Activated CD8-positive, alpha-beta memory T cell treated with anti-CD3 and anti-CD28 coated beads, Interleukin-2, amount 10 ng/mL, durations not matched to agents 7 days and 5 days (primary cell): ENCODE measurements at regions of chr11 and their contacts with region 1.

Region 1: DNA sequence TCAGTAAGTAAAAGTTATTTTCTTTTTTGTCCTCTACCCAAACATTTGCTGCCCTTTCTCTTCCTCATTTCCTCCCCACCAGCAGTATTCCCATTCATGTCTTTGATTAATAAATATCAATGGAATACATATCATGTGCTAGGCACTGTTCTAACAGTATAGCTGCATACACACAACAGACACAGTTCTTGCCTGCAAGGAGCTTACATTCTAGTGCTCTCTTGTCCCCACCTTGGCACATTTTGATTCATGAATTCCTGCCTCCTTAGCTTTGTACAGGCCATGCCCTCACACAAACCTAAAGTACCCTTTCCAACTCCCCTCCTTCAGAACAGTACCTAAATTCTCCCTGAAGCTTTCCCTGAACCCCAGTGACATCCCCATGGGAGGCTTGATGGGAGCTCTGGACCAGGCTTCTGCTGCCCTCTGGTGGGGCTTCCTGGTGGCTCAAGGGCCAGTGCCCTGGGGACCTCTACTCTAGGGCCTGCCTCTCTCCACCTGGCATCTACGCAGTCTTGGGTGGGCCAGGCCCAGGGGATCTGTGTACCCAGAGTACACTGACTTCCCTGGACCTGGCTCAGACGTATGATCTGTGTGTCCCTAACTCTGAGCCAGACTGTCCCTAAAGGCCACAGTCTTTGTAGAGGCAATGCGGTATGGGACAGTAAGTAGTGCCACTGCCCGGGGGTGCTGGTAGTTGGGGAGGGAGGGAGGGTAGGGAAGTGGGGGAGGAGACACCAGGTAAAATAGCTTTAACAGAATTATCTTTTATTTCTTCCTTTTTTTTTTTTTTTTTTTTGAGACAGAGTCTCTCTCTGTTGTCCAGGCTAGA is 14.1 kb downstream of the RPS13 start:
- DNase-seq: peak; percentile 63
- ATAC-seq: peak; percentile 77
- H3K4me3 Mint-ChIP-seq: no peak overlapping the region
- H3K27ac Mint-ChIP-seq: no peak overlapping the region
- H3K4me1 Mint-ChIP-seq: no peaks in the 10 kb centered on the region
- H3K27me3 Mint-ChIP-seq: peaks cover 7% of the 10 kb centered on the region

Region 2: DNA sequence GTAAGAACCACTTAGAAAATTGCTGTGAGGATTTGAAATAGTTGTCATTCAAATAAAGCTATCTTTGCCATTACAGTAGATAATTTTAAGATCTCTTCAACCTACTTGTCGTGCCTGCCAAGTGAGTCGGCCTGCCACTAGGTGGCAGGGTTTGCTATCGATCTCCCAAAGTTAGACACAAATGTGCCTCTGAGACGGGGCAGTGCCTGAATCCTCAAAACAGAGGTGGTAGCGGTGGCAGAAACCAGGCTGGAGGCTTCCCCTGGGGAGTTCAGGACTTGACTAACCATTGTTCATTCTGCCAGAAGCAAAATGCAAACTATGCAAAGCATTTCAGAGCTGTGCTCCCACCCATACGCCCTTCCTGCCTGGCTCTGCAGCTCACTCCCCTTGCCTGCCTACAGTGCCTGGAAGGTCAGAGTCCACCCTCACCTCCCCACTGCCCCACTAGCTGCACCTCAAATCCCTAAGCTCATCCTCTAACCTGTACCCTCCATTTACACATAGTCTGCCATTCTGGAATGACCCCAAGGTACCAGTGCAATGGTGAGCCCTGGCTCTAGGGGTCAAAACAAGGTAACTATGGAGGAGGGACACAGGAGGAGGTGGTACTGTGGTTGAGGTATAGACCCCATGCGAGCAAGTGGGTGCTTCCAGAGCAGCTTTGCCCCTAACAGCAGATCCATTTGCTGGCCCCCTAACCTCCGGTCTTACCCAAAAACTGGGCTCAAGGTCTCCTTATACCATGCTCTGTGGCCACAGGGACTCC is 242.9 kb before region 1 on chr11:
- CTCF ChIA-PET with region 1: interaction called, 19 read pairs
- DNase-seq: peak; percentile 78
- ATAC-seq: peak; percentile 76
- H3K4me3 Mint-ChIP-seq: no peak overlapping the region
- H3K27ac Mint-ChIP-seq: no peak overlapping the region
- H3K4me1 Mint-ChIP-seq: peaks cover 4% of the 10 kb centered on the region
- H3K27me3 Mint-ChIP-seq: peaks cover 10% of the 10 kb centered on the region

Region 3: DNA sequence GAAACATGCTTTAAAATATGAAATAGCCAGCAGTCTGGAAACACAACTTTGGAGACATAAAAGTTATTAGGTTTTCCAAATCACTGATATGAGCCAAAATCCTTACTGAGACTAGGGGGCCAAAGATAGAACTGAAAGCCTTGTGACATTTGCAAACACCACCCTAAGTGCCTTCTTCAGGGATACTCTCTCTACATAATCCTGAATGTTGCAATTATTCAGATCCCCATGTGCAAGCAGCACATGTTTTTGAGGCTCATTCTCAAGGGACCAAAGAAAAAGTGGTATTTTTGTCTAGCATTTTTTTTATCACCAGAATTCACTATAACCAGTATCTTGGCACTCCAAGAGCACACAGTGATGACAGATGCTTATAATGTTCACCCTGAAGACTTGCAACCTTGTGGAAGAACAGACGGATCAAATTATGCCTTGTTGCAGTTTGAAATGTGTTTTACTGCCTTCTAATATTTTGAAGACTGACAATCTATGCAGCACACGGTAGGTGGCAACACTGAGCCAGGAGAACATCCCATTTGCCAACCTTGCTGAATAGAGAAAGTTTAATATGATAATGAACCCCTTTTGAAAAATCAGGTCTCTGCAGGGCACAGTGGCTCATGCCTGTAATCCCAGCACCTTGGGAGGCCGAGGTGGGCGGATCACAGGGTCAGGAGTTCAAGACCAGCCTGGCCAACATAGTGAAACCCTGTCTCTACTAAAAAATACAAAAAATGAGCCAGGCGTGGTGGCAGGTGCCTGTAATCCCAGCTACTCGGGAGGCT is 127.7 kb before region 1 on chr11:
- CTCF ChIA-PET with region 1: interaction called, 15 read pairs
- DNase-seq: no peak
- ATAC-seq: no peak
- H3K4me3 Mint-ChIP-seq: no peak overlapping the region
- H3K27ac Mint-ChIP-seq: no peak overlapping the region
- H3K4me1 Mint-ChIP-seq: no peaks in the 10 kb centered on the region
- H3K27me3 Mint-ChIP-seq: peaks cover 24% of the 10 kb centered on the region

Region 4: DNA sequence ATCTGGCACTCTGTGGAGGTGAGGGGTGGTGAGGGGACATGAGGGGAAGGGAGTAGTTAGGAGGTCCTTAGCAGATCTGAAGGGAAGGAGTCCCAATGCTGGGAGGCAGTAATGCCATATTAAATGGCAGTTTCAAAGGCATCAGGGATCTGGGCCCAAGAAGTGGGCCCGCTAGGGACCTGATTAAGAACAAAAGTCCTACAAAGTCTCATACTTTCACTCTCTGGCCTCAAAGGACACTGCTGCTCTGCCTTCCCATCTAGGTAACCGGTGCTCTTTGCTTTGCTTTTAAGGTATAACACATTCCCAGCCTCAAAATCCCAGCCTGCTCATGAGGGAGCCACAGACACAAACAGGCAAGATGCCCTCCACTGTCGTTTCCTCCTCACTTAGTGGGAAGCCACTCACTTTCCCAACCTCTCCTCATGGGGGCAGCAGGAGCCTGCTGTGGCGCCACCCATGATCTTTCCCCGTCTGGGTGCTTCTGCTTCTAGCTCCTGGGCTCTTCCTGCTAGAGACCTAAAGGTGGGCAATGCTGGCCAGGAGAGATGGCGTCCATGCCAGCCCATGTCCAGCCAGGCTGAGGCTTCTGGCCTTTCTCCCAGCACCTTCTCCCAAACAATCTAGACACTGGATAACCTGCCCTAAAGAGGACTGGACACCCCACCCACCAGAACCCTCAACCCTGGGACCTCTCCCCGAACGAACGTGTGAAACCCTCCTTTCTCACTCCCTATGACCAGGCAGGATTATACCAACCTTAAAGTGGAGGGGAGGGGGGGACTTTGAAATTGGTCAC is 117.5 kb before region 1 on chr11:
- CTCF ChIA-PET with region 1: interaction called, 19 read pairs
- DNase-seq: peak; percentile 65
- ATAC-seq: peak; percentile 88
- H3K4me3 Mint-ChIP-seq: no peak overlapping the region
- H3K27ac Mint-ChIP-seq: no peak overlapping the region
- H3K4me1 Mint-ChIP-seq: peaks cover 5% of the 10 kb centered on the region
- H3K27me3 Mint-ChIP-seq: no peaks in the 10 kb centered on the region

Region 5: DNA sequence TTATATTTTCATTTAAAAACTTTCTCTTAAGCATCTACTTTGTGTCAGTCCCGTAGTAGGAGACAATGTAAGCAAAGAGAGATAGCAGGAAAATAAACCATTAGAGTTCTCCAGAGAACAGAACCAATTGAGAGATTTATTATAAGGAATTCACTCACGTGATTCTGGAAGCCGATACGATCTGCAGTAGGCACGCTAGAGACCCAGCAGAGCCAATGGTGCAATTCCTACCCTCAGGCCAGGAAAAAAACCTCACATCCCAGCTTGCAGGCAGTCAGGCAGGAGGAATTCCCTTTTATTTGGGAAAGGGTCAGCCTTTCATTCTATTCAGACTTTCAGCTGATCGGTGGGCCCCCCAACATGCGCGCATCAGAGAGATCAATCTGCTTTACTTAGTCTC is 41.9 kb before region 1 on chr11:
- CTCF ChIA-PET with region 1: no interaction called
- DNase-seq: no peak
- ATAC-seq: no peak
- H3K4me3 Mint-ChIP-seq: no peak overlapping the region
- H3K27ac Mint-ChIP-seq: no peak overlapping the region
- H3K4me1 Mint-ChIP-seq: no peaks in the 10 kb centered on the region
- H3K27me3 Mint-ChIP-seq: peaks cover 16% of the 10 kb centered on the region

Region 6: DNA sequence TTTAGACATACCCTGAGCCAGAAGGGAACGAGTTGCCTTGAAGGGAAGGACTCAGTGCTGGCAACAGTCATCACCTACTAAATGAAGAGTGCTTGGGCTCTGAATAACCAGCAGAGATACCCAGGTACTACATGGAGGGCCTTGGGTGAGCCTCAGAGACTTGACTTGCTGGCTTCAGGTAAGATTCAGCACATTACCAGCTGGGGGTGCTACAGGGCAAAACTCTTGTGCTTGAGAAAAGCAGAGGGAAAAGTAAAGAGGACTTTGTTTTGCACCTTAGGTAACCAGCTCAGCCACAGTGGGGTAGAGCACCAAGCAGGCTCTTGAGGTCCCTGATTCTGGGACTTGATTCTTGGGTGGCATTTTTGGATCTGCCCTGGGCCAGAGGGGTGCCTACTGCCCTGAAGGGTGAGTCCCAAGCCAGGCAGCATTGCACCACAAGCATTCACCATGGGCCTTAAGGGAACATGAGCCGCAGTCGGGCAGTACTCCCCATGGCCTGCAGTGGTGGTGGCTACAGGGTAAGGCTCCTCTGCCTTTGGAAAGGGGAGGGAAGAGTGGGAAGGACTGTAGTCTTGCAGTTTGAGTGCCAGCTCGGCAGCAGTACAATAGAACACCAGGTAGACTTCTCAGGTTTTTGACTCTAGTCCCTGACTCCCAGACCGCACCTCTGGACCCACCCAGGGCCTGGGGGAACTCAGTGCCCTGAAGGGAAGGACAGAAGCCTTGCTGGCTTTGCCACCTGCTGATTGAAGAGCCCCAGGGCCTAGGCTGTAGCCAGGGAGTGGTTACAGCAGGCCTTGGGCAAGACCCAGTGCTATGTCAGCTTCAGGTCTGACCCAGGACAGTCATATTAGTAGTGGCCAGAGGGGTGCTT is 26.5 kb before region 1 on chr11:
- CTCF ChIA-PET with region 1: no interaction called
- DNase-seq: no peak
- ATAC-seq: no peak
- H3K4me3 Mint-ChIP-seq: no peak overlapping the region
- H3K27ac Mint-ChIP-seq: no peak overlapping the region
- H3K4me1 Mint-ChIP-seq: no peaks in the 10 kb centered on the region
- H3K27me3 Mint-ChIP-seq: peaks cover 6% of the 10 kb centered on the region